Panc1 (cell line): ENCODE measurements at regions of chrX and their contacts with region 1.

Region 1: DNA sequence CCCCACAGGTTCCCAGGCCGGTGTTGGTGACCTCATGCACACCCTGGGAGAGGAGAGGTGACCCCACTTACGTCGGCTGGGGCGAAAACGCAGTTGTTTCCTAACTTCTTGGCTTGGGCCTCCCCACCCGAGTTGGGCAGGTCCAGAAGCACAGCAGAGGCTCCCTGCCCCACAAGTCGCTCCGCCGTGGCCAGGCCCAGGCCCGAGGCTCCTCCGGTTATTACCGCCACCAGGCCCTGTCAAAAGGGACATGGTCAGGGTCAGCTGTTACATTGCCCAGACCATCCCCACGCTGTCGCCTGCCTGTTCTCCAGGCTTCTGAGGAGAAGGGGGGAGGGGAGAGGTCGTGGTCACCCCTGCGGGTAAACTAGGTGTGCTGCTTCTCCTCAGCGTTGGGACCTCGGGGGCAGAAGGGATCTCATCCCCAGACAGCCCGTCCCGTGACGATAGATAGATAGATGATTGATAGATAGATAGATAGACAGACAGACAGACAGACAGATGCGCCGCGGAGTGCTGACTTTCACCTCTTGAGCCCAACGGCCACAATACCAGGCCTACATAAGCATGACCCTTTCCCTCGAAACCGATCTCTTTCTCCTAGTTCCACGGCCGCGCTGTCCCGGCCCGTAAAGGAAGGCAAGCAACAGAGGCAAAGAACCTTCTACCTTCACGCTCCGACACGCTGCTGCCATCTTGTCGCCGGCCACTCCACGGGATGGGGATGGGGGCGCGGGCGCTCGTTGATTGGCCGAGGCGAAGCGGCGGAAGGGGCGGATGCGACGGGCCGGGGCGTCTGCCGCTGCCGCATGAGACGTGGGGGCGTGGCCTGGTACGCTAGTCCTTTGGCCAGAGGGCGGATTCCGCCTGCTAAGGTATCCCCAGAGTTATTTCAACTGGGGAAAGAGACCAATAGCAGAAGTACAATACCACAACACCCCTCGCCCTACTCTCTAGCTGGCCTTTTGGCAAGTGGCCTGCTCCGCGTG is at the start of gene HSD17B10:
- DNase-seq: no peak
- ATAC-seq: peak; percentile 99
- H3K4me3 ChIP-seq: peak within 1 kb of the TSS; percentile 92 to 93
- H3K27ac ChIP-seq: peak within 1 kb of the TSS; percentile 93
- H3K4me1 ChIP-seq: peaks cover 4% of the 10 kb centered on the region; the same call in 1 of the 2 replicates
- H3K27me3 ChIP-seq: no peaks in the 10 kb centered on the region
- CTCF ChIP-seq: no peak
- total RNA-seq, gene HSD17B10: 216 TPM

Region 2: GRCh38 chrX:53317365-53318069 is 116.4 kb before region 1 on chrX:
- CTCF ChIA-PET with region 1: no interaction called
- POLR2A ChIA-PET with region 1: no interaction called
- in situ Hi-C with region 1: no loop called
- intact Hi-C with region 1: loop called (anchors 2 kb)
- DNase-seq: no peak
- ATAC-seq: peak; percentile 71
- H3K4me3 ChIP-seq: no peak overlapping the region
- H3K27ac ChIP-seq: no peak overlapping the region
- H3K4me1 ChIP-seq: peaks cover 4% of the 10 kb centered on the region
- H3K27me3 ChIP-seq: no peaks in the 10 kb centered on the region; the same call in none of the 2 replicates
- CTCF ChIP-seq: peak; percentile 91

Region 3: GRCh38 chrX:53340852-53341607 is 92.9 kb before region 1 on chrX:
- CTCF ChIA-PET with region 1: no interaction called
- POLR2A ChIA-PET with region 1: no interaction called
- in situ Hi-C with region 1: no loop called
- intact Hi-C with region 1: no loop called
- DNase-seq: no peak
- ATAC-seq: no peak; the same call in 1 of the 2 replicates
- H3K4me3 ChIP-seq: no peak overlapping the region
- H3K27ac ChIP-seq: no peak overlapping the region
- H3K4me1 ChIP-seq: no peaks in the 10 kb centered on the region
- H3K27me3 ChIP-seq: no peaks in the 10 kb centered on the region
- CTCF ChIP-seq: no peak